ENCODE measurements at regions of chr9 and their contacts with region 1.

Region 1: GRCh38 chr9:35923927-35924763 is 14.9 kb downstream of the SPAAR start:
- DNase-seq: peak; percentile 72
- ATAC-seq: peak; percentile 97
- H3K4me3 Mint-ChIP-seq: no peak overlapping the region
- H3K27ac Mint-ChIP-seq: peak overlapping the region; percentile 53
- H3K4me1 Mint-ChIP-seq: peaks cover 25% of the 10 kb centered on the region
- H3K27me3 Mint-ChIP-seq: no peaks in the 10 kb centered on the region

Region 2: GRCh38 chr9:35847792-35848572 is 76.2 kb before region 1 on chr9:
- CTCF ChIA-PET with region 1: no interaction called
- POLR2A ChIA-PET with region 1: no interaction called
- intact Hi-C with region 1: loop called in 1 of 2 experiments (anchors 1 kb)
- DNase-seq: peak; percentile 73
- ATAC-seq: peak; percentile 96
- H3K4me3 Mint-ChIP-seq: no peak overlapping the region
- H3K27ac Mint-ChIP-seq: peak overlapping the region; percentile 24
- H3K4me1 Mint-ChIP-seq: peaks cover 28% of the 10 kb centered on the region
- H3K27me3 Mint-ChIP-seq: no peaks in the 10 kb centered on the region